Stomach (tissue), 19 donors: ENCODE measurements at regions of chr9 and their contacts with region 1.

Region 1: DNA sequence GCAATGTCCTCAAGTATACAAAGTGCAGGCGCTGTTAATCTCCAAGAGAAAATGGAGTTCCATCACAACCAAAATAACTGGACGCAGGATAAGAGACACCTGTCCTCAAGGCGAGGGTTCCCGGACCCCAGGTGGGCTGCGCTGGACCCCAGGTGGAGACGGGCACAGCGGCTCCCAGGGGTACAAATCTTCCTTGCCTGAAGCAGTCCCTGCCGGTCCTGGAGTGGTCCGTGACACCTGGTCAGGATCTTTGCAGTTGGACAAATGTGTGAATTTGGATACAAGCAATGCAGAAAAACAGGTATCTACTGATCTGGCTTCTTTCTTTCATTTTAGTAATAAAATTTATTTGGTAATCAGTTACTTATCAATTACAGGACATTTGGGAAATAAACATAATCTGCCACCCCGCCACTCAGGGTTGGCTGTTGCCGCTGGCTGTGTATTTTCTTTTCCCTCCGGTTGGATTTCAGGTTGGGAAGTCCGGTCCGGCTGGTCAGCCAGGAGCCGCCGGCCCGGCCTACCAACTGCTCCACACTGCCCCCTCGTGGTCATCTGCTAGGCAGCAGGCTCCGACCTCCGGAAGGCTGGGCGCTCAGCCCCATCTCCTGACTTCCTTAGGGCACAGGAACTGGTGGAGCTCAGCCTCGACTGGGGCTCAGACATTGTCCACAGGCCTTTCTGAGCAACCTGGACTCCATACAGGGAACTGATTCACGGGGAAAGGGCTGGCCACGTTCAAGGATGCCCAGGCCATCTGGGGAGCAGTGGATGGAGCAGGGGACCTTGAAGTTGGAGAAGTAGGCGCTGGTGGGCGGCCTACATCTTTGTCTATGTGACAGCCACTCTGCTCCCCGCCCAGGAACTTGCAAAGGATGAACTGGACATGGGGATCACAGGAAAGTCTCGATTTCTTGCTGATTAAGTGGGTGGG is 43.4 kb downstream of the NXNL2 start:
- DNase-seq: peak; percentile 89 to 92
- H3K4me3 ChIP-seq: no peak overlapping the region
- H3K27ac ChIP-seq: no peak overlapping the region
- H3K4me1 ChIP-seq: peaks cover 0 to 9% (median 7%) of the 10 kb centered on the region in 4 donors
- H3K27me3 ChIP-seq: no peaks in the 10 kb centered on the region
- CTCF ChIP-seq: peak in 6 of 7 experiments; percentile 27 to 99 (median 92)
- EP300 ChIP-seq: no peak
- POLR2A ChIP-seq: no peak

Region 2: GRCh38 chr9:88106491-88106890 is 471.9 kb before region 1 on chr9:
- intact Hi-C with region 1: loop called (anchors 10 kb)
- DNase-seq: peak; percentile 27 to 74
- H3K4me3 ChIP-seq: no peak overlapping the region
- H3K27ac ChIP-seq: no peak overlapping the region
- H3K4me1 ChIP-seq: no peaks in the 10 kb centered on the region
- H3K27me3 ChIP-seq: peaks cover 0 to 20% (median 0%) of the 10 kb centered on the region in 3 donors
- CTCF ChIP-seq: peak in 5 of 7 experiments; percentile 30 to 62 (median 40)
- EP300 ChIP-seq: no peak
- POLR2A ChIP-seq: no peak

Region 3: GRCh38 chr9:88291856-88292255 is 286.5 kb before region 1 on chr9:
- intact Hi-C with region 1: no loop called
- DNase-seq: no peak
- H3K4me3 ChIP-seq: no peak overlapping the region
- H3K27ac ChIP-seq: no peak overlapping the region
- H3K4me1 ChIP-seq: no peaks in the 10 kb centered on the region
- H3K27me3 ChIP-seq: no peaks in the 10 kb centered on the region
- CTCF ChIP-seq: no peak
- EP300 ChIP-seq: no peak
- POLR2A ChIP-seq: no peak